Prostate gland (tissue), 2 donors: ENCODE measurements at regions of chr5 and their contacts with region 1.

Region 1: DNA sequence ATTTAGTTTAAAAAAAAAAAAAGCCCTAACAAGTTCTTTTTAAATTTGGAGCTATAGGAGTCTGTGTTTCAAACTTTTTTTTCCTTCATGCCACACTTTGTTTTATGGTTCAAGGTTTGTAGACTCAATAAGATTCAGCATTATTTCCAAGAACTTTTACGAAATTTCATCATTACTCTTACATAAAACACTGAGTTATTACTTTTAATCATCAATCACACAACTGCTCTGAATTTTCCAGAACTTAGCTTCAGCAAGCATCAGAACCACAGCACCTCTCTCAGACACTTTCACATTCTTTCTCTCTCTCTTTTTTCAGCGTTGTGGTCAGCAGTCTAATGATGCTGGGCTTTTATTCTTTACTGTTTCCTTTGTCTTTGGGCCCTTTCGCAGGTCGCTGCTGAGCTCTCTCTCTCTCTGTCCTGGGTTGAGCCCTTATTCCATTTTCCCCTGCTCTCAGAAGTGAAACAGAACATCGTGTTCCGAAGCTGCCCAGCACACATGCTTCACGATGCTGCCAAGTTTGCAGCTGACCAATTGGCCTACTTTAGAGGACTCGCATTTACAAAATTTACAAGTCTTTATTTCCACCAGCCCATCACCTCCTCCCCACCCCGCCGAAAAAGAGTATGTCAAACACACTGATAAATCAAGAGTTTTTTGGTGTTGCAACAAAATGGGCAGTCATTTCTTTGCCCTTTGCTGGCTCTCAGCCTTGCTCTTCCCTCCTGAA is 44.6 kb upstream of the PIK3R1 start:
- DNase-seq: peak; percentile 55
- H3K4me3 ChIP-seq: no peak overlapping the region
- H3K27ac ChIP-seq: peak overlapping the region; percentile 50 to 64
- H3K4me1 ChIP-seq: no peaks in the 10 kb centered on the region
- H3K27me3 ChIP-seq: no peaks in the 10 kb centered on the region
- CTCF ChIP-seq: no peak
- POLR2A ChIP-seq: no peak

Region 2: DNA sequence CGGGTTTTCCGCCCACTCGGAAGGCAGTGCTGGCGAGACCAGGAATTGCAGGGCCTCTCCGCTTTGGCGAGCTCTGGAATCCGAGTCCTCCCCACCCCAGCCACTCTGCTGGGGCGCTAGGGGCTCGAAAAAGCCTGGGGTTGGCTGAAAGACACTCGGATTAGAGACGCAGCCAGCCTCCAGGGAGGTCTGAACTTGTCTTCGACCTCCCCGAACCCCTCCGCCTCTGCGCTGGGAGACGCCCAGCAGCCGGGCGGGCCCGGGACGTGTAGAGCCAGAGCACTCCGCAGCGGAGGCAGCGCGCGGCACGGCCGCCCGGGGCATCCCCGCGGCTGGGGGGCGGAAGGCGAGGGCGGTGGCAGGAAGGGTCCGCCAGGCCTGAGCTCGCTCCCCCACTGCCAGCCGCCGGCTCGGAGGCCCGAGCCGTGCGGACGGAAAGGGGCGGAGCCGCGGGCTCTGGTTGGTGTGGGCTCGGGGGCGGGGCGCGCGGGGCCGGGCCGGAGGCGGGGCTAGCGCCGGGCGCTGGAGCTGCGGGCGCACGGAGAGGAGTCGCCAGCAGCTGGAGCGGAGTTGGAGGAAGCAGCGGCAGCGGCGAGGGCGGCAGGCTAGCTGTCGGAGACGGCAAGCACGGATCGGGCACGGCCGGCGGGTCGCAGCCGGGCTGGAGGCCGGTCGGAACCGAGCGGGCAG is 44.4 kb after region 1 on chr5 and contains the start of gene PIK3R1:
- intact Hi-C with region 1: loop called (anchors 2 kb)
- DNase-seq: peak; percentile 96
- H3K4me3 ChIP-seq: peak within 1 kb of the TSS; percentile 67 to 86
- H3K27ac ChIP-seq: peak within 1 kb of the TSS; percentile 95 to 96
- H3K4me1 ChIP-seq: no peaks in the 10 kb centered on the region
- H3K27me3 ChIP-seq: no peaks in the 10 kb centered on the region
- CTCF ChIP-seq: peak in 3 of 4 experiments; percentile 31 to 63 (median 52)
- POLR2A ChIP-seq: peak; percentile 95
- total RNA-seq, gene PIK3R1: 71.6 to 81.2 TPM